Posterior vena cava (tissue), 2 donors: ENCODE measurements at regions of chr3 and their contacts with region 1.

Region 1: DNA sequence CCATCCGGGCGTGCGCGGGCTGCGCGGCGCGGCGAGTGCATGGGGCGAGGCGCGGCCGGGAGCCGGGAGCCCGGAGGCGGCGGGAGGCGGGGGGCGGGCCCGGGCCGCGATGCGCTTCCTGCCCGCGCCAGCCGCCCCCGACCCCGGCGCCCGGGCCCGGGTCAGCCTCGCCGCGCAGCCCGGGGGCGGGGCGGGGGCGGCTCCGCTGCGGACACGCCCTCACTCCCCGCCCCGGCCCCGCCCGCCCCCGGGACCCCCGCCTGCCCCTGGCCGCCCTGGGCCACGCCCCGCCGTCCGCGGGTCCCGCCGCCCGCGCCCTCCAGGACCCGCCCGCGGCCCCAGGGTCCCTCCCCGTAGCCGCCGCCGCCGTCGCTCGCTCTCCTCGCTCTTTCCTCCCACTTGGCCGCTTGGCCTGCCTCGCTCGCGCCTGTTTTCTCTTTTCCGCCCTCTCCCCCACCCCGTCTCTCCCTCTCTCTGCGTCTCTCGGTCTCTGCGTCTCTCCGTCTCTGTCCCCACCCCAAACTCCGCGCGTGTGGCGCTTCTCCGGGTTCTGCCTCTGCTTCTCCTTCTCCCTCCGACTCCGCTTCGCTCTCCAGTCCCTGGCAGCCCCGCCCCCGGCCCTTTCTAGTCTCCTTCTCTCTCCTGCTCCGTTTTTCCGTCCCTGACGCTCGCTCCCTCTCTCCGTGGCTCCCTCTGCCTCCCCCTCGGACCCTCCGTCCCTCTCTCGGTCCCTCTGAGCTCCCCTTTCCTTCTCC is at the start of gene PLXND1:
- DNase-seq: peak; percentile 95
- total RNA-seq, gene PLXND1: 155 to 241 TPM

Region 2: GRCh38 chr3:129503471-129504291 is 103.1 kb before region 1 on chr3:
- intact Hi-C with region 1: loop called in 1 of 2 experiments (anchors 5 kb)
- DNase-seq: no peak

Region 3: GRCh38 chr3:129560901-129561594 is 45.8 kb before region 1 on chr3:
- intact Hi-C with region 1: loop called in 1 of 2 experiments (anchors 2 kb)
- DNase-seq: peak; percentile 95

Region 4: DNA sequence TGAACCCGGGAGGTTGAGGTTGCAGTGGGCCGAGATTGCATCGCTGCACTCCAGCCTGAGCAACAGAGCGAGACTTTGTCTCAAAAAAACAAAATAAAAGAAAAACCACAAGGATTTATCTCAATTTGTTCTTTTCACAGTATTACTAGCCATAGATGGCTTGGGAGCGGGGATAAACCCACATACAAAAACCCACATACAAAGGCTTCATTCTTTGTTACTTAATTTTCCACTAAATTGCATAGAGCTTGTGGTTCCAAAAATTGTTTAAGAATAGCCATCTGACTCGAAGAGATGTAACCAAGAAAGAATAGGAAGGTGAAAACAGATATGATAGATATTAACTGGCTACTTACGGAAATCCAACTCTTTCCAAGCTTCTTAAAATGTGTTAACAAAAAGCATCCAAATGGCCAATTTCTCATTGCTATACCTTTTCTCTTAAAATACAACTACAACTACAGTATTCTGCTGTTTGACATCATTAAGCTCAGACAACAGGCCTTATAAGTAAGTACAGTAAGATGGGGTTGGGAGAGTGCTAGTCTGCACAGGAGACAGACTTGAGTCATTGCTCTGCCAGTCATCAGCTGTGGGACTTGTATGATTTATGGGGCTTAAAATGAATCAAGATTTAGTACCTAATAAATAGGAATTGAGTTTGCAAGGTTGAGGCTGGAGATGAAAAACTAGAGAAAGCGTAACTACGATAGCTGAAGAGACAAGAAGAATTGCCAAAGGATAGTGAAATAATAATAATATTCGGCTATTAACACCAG is 96.3 kb after region 1 on chr3:
- intact Hi-C with region 1: no loop called
- DNase-seq: no peak

Region 5: GRCh38 chr3:130014526-130014925 is 407.7 kb after region 1 on chr3:
- intact Hi-C with region 1: no loop called
- DNase-seq: no peak